ENCODE measurements at regions of chr12 and their contacts with region 1.

Region 1: GRCh38 chr12:130747867-130748740 is 32.0 kb upstream of the RIMBP2 start:
- DNase-seq: peak; percentile 89
- H3K4me3 ChIP-seq: no peak overlapping the region; a peak in 2 of 4 replicates
- H3K27ac ChIP-seq: peak overlapping the region in 1 of 2 experiments; percentile 87; a peak in 2 of 4 replicates
- H3K4me1 ChIP-seq: peaks cover 0 to 9% of the 10 kb centered on the region in 2 experiments; a peak in 1 of 4 replicates
- H3K27me3 ChIP-seq: no peaks in the 10 kb centered on the region
- CTCF ChIP-seq: peak; percentile 53
- EP300 ChIP-seq: no peak; a peak in 1 of 4 replicates
- RAD21 ChIP-seq: peak; percentile 96

Region 2: DNA sequence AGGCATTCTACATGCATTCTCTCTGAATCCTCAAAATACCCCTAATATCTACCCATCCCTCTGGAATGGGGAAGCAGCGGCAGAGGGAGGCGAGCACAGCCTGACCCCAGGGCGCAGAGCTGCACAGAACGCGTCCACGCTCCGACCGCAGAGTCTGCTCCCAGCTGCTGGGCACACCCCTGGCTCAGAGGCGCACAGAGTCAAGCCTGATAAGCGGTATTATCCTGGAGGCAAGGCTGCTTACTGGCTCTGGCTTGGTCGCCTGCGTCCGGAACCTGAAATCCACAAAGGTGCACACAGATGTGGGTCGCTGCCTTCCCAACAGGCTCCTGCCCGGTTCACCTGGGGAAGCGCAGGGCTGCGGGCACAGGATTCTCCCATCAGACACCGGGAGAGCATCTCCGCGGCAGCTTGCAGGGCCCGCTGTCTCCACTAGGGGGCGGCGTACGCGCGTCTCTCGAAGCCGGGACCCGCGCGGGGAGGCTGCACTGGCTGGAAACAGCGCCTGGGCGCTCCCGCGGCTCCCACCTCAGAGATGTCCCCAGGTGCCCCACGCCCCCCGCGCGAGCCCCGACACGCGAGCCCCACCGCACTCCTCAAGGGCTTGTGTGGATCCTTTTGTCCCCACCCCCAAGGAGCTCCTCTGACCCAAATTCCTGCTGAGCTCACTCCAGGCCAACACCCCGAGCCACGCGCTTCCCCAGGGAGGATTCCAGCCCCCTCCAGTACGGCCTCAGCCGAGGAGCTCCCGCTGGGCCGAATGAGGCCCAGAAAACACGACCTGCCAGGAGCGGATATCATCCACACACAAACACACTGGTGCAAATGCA is 705.9 kb before region 1 on chr12:
- CTCF ChIA-PET with region 1: interaction called, 19 read pairs
- POLR2A ChIA-PET with region 1: no interaction called
- DNase-seq: peak; percentile 94
- H3K4me3 ChIP-seq: peak overlapping the region in 1 of 2 experiments; percentile 15; a peak in 1 of 4 replicates
- H3K27ac ChIP-seq: no peak overlapping the region
- H3K4me1 ChIP-seq: peaks cover 0 to 6% of the 10 kb centered on the region in 2 experiments; a peak in 1 of 4 replicates
- H3K27me3 ChIP-seq: no peaks in the 10 kb centered on the region
- CTCF ChIP-seq: no peak
- EP300 ChIP-seq: no peak
- RAD21 ChIP-seq: peak; percentile 69

Region 3: DNA sequence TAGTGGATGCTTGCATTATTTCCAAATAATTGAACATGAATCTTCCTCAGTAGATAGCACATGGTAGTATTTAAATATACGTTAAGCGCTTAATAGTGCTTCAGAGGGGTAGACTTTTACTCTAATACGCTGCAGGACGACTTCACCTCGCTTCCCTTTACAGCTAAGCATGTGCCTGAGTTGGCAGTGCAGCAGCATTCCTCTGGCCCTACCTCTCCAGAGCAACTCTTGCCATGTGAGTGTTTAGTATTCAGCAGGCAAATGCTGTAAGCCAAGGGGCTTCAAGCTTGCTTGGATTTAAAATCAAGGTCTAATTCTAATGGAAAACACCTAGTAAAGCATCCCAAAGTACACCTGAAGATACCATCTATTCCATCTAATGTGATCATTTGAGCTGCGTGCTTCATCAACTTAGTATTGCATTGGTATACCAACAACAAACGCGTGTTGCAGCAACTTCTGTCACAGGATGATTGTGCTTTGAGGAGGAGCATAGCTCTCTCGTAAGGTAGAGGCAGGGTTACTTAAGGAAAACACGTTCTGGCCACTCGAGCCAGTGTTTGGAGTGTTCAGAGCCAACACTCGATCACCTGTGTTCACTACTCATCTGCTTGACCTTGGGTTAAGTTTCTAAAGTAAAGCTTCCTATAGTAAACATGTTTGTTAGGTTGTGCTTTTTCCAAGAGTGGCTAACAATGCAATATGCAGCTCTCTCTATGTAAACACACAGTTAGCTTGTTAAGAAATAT is 349.8 kb before region 1 on chr12:
- CTCF ChIA-PET with region 1: interaction called, 13 read pairs
- POLR2A ChIA-PET with region 1: no interaction called
- DNase-seq: no peak
- H3K4me3 ChIP-seq: no peak overlapping the region
- H3K27ac ChIP-seq: no peak overlapping the region
- H3K4me1 ChIP-seq: no peaks in the 10 kb centered on the region; a peak in 1 of 4 replicates
- H3K27me3 ChIP-seq: no peaks in the 10 kb centered on the region
- CTCF ChIP-seq: no peak
- EP300 ChIP-seq: no peak
- RAD21 ChIP-seq: no peak

Region 4: DNA sequence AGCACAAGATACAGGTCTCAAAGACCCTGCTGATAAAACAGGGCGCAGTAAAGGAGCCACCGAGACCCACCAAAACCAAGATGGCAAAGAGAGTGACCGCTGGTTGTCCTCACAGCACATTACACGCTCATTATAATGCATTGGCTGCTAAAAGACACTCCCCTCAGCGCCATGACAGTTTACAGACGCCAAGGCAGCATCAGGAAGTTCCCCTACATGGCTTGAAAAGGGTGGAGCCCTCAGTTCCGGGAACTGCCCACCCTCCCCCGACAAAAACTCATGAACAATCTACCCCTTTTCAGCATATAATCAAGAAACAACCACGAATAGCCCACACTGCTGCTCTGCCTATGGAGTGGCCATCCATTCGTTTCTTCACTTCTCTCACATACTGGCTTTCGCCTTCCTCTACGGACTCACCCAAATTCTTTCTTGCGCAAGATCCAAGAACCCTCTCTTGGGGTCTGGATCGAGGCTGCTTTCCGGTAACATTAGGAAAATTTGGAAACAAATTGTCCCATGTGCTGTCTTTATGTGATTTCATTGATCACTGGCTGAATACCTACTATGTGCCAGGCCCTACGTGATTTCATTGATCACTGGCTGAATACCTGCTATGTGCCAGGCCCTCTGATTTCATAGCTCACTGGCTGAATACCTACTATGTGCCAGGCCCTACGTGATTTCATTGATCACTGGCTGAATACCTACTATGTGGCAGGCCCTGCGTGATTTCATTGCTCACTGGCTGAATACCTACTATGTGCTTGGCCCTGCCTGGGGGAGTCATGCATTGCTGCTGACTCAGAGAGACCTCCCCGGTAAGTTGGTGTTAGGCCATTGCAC is 284.1 kb before region 1 on chr12:
- CTCF ChIA-PET with region 1: interaction called, 27 read pairs
- POLR2A ChIA-PET with region 1: no interaction called
- DNase-seq: no peak
- H3K4me3 ChIP-seq: no peak overlapping the region
- H3K27ac ChIP-seq: peak overlapping the region in 1 of 2 experiments; percentile 53; a peak in 2 of 4 replicates
- H3K4me1 ChIP-seq: peaks cover 0 to 24% of the 10 kb centered on the region in 2 experiments; a peak in 1 of 4 replicates
- H3K27me3 ChIP-seq: no peaks in the 10 kb centered on the region
- CTCF ChIP-seq: no peak
- EP300 ChIP-seq: no peak
- RAD21 ChIP-seq: no peak

Region 5: GRCh38 chr12:130633776-130634175 is 114.3 kb before region 1 on chr12:
- CTCF ChIA-PET with region 1: interaction called, 13 read pairs
- POLR2A ChIA-PET with region 1: interaction called, 3 read pairs
- DNase-seq: peak; percentile 81
- H3K4me3 ChIP-seq: peak overlapping the region in 1 of 2 experiments; percentile 46; a peak in 2 of 4 replicates
- H3K27ac ChIP-seq: peak overlapping the region in 1 of 2 experiments; percentile 99; a peak in 2 of 4 replicates
- H3K4me1 ChIP-seq: peaks cover 0 to 35% of the 10 kb centered on the region in 2 experiments; a peak in 2 of 4 replicates
- H3K27me3 ChIP-seq: no peaks in the 10 kb centered on the region
- CTCF ChIP-seq: no peak
- EP300 ChIP-seq: peak in 1 of 2 experiments; percentile 81; a peak in 1 of 4 replicates
- RAD21 ChIP-seq: peak; percentile 15

Region 6: DNA sequence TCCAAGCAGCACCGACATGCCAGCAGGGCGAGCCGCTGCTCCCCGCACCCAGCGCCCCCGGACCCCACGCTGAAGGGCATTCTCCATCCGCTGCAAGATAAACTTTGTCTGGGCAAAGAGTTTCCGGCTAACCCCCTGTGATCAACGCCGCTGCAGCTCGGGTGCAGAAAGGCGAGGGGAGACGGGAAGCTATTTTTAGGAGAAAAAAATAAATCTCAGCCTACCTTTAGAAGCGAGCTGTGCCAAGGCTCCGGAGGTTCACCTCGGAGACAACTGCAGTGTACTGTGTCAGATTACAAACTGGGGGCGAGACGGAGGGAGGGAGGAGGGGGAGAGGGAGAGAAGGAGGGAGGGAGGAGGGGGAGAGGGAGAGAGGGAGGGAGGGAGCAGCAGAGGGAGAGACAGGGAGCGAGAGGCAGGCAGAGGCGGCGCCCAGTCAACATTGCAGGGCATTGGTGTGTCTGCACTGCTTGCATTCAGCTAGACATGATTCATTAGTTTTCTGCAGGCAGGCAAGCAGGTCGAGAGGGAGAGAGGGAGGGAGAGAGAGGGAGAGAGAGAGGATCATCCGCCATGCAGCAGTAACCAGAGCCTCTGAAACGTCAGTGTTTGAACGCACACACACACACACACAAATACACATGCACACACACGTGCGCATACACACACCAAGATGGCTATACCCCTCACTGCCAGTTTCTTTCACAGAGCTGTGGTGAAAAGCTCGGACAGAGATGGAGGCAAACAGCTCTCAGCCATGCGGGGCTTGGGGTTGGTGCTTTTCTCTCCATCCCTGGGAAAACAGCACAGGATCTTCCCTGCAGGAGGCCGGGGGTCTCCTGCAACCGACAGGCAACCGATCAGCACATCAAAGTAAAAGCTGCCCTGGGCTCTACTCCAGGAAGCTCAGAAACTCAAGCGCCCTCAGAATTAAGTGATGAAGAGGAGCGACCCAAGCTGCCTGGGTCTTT is 31.8 kb before region 1 on chr12 and contains the start of gene RIMBP2:
- CTCF ChIA-PET with region 1: interaction called, 33 read pairs
- POLR2A ChIA-PET with region 1: interaction called, 3 read pairs
- DNase-seq: peak; percentile 62
- H3K4me3 ChIP-seq: peak within 1 kb of the TSS in 1 of 2 experiments; percentile 60; a peak in 2 of 4 replicates
- H3K27ac ChIP-seq: peak within 1 kb of the TSS in 1 of 2 experiments; percentile 84; a peak in 2 of 4 replicates
- H3K4me1 ChIP-seq: peaks cover 0 to 38% of the 10 kb centered on the region in 2 experiments; a peak in 1 of 4 replicates
- H3K27me3 ChIP-seq: no peaks in the 10 kb centered on the region
- CTCF ChIP-seq: no peak
- EP300 ChIP-seq: no peak
- RAD21 ChIP-seq: 0 out of 2 replicates have a peak, but pooled peaks have one; percentile 2
- polyA plus RNA-seq, gene RIMBP2: 0.90 and 1.1 TPM in 2 replicates

Region 7: DNA sequence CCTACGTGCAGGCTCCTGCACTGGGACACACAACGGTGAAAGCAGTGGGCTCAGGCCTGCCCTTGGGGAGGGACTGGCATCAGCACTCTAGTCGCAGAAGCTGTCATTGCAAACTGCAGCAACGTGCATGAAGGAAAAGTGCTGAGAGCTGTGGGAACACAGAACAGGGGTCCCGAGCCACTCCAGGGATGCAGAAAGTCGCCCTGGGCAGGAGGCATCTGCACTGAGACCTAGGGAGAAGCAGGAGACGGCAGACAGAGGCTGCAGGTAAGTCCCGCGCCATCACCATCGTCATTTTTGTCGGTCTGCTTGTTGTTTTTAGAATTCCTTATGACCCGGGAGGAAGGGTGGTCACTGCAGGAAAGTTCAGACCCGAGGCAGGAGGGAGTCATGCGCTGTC is 10.4 kb before region 1 on chr12:
- CTCF ChIA-PET with region 1: interaction called, 10 read pairs
- POLR2A ChIA-PET with region 1: no interaction called
- DNase-seq: no peak
- H3K4me3 ChIP-seq: no peak overlapping the region
- H3K27ac ChIP-seq: no peak overlapping the region
- H3K4me1 ChIP-seq: no peaks in the 10 kb centered on the region
- H3K27me3 ChIP-seq: no peaks in the 10 kb centered on the region
- CTCF ChIP-seq: no peak
- EP300 ChIP-seq: no peak
- RAD21 ChIP-seq: no peak

Region 8: GRCh38 chr12:130806574-130806973 is 58.5 kb after region 1 on chr12:
- CTCF ChIA-PET with region 1: no interaction called
- POLR2A ChIA-PET with region 1: no interaction called
- DNase-seq: no peak
- H3K4me3 ChIP-seq: no peak overlapping the region
- H3K27ac ChIP-seq: no peak overlapping the region
- H3K4me1 ChIP-seq: no peaks in the 10 kb centered on the region
- H3K27me3 ChIP-seq: no peaks in the 10 kb centered on the region
- CTCF ChIP-seq: no peak
- EP300 ChIP-seq: no peak
- RAD21 ChIP-seq: no peak

Region 9: DNA sequence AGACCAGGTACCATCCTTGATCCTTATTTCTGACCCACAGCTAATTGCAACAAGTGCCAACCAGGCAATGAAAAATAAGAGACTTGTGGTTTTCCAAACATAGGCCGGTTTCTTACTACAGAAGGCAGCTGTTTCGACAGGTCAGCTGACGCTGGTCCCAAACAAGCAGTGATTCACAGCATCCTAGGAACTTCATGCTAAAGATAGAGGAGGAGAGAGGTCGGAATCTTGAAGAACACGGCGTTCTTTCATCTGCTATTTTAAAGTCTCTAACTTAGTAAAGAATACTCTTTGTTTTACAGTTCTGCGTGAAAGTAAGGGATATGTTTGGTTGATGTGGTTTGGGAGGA is 177.5 kb after region 1 on chr12:
- CTCF ChIA-PET with region 1: no interaction called
- POLR2A ChIA-PET with region 1: no interaction called
- DNase-seq: no peak
- H3K4me3 ChIP-seq: no peak overlapping the region
- H3K27ac ChIP-seq: no peak overlapping the region
- H3K4me1 ChIP-seq: no peaks in the 10 kb centered on the region
- H3K27me3 ChIP-seq: no peaks in the 10 kb centered on the region
- CTCF ChIP-seq: no peak
- EP300 ChIP-seq: no peak
- RAD21 ChIP-seq: no peak

Measured in SK-N-SH (cell line).